ENCODE measurements at regions of chr19 and their contacts with region 1.

Region 1: GRCh38 chr19:35693830-35694599 is 10.3 kb upstream of the ZBTB32 start:
- DNase-seq: peak; percentile 78 to 96
- ATAC-seq: peak; percentile 100
- H3K4me3 ChIP-seq: no peak overlapping the region
- H3K4me3 Mint-ChIP-seq: no peak overlapping the region
- H3K27ac ChIP-seq: no peak overlapping the region
- H3K27ac Mint-ChIP-seq: no peak overlapping the region
- H3K4me1 ChIP-seq: no peaks in the 10 kb centered on the region
- H3K4me1 Mint-ChIP-seq: no peaks in the 10 kb centered on the region
- H3K27me3 ChIP-seq: no peaks in the 10 kb centered on the region
- H3K27me3 Mint-ChIP-seq: no peaks in the 10 kb centered on the region
- CTCF ChIP-seq: peak; percentile 97

Region 2: GRCh38 chr19:35822579-35822978 is 128.6 kb after region 1 on chr19:
- intact Hi-C with region 1: loop called (anchors 2 kb)
- DNase-seq: no peak
- ATAC-seq: no peak
- H3K4me3 ChIP-seq: no peak overlapping the region
- H3K4me3 Mint-ChIP-seq: no peak overlapping the region
- H3K27ac ChIP-seq: no peak overlapping the region
- H3K27ac Mint-ChIP-seq: no peak overlapping the region
- H3K4me1 ChIP-seq: no peaks in the 10 kb centered on the region
- H3K4me1 Mint-ChIP-seq: no peaks in the 10 kb centered on the region
- H3K27me3 ChIP-seq: no peaks in the 10 kb centered on the region
- H3K27me3 Mint-ChIP-seq: peaks cover 0 to 6% of the 10 kb centered on the region in 2 donors
- CTCF ChIP-seq: no peak